Left cardiac atrium (tissue), 4 donors: ENCODE measurements at regions of chr2 and their contacts with region 1.

Region 1: GRCh38 chr2:202033321-202034248 is at the start of gene FZD7:
- DNase-seq: peak; percentile 95
- ATAC-seq: peak; percentile 86 to 92
- total RNA-seq, gene FZD7: 12.2 to 18.9 TPM

Region 2: GRCh38 chr2:201882353-201883090 is 151.1 kb before region 1 on chr2:
- intact Hi-C with region 1: loop called in 1 of 2 experiments (anchors 10 kb)
- DNase-seq: no peak
- ATAC-seq: peak; percentile 10 to 25

Region 3: GRCh38 chr2:202178342-202178958 is 144.9 kb after region 1 on chr2:
- intact Hi-C with region 1: loop called in 1 of 2 experiments (anchors 10 kb)
- DNase-seq: peak; percentile 47
- ATAC-seq: peak; percentile 82 to 86